ENCODE measurements at regions of chr6 and their contacts with region 1.

Region 1: DNA sequence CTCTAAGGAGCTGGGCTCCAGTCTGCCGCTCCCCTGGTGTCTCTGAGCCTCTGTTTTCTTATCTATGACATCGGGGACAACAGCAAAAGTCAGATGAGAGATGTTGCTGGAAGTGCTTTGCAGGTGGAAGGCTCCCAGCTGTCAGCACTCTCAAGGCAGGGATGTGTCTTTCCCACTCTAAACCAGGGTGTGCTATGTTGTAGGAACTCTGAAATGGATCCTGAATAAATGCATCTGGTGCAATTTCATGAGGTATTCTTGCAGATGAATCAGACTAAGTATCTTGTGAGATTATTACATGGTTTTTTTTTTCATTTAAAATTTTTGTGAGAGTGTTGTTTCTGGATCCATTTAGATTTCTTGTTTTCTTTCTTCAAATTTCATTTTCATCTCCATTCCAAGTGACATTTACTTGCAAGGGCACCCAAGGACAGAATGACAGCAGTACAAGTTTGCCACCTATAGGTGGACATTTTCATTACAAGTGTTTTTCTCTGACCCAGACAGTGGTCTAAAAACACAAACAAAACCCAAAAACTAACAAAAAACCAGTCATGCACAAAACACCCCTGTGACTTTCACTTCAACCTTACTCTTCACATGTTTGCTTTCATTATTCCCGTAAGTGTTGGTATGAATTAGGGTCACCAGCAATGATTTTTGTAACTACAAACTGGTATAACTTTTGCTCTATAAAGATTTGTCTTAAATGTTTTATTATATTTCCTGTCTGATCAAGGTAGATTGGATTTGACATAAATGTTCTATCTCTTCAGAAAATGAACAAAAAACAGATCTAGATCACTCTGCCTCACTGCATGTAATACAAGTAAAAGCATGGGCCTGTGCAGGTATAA is 14.7 kb upstream of the SIM1 start:
- DNase-seq: peak; percentile 39 to 42
- H3K4me3 ChIP-seq: no peak overlapping the region
- H3K4me1 ChIP-seq: no peaks in the 10 kb centered on the region
- H3K27me3 ChIP-seq: no peaks in the 10 kb centered on the region

Region 2: DNA sequence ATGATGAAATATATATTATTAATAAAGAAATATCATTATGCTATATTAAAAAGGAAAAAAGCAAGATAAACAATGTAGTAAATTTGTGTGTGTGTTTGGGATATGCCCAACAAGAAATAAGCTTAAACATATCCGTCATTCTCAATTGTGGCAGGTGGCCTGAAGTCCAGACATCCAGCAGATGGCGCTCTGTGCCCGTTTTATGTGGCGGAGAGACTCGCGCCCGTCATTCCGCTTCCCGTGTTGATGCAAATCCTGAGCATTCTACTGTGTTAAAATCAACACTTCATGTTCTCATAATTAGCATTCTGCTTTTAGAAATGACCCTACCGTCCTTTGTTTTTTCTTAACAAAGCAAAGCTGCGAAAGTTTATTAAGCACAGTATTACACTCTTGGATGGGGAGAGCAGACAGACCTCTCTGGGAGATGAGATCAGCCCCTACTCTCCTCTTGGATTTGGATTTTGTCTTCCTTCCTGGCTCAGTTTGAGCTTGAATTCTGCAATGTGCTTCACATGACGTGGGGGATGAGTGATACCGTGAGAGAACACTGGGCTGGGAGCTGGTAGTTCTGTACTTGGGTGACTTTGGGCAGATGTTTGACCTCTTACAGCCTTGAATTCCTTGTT is 611.2 kb before region 1 on chr6:
- in situ Hi-C with region 1: loop called (anchors 10 kb)
- DNase-seq: peak; percentile 69 to 90
- H3K4me3 ChIP-seq: no peak overlapping the region
- H3K4me1 ChIP-seq: no peaks in the 10 kb centered on the region
- H3K27me3 ChIP-seq: peaks cover 9% of the 10 kb centered on the region

Region 3: GRCh38 chr6:100126790-100127484 is 352.5 kb before region 1 on chr6:
- in situ Hi-C with region 1: loop called (anchors 5 kb)
- DNase-seq: no peak
- H3K4me3 ChIP-seq: no peak overlapping the region
- H3K4me1 ChIP-seq: no peaks in the 10 kb centered on the region
- H3K27me3 ChIP-seq: no peaks in the 10 kb centered on the region

Region 4: DNA sequence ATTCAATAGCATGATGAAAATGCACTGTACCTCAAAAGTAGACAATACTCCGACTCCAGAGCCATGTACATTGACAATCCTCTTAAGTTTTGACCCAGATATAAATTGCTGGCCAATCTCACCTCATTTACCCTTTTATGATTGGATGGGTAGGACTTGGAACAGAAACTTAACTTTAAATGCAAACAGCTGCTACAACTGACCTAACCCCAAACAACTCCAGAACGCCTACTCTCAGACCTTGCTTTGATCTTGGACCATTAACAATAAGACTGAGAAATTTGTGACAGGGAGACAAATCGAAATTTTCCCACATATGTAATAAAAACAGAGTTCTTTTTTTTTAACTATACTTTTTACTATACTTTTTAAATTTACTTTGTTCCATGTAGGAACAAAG is 284.9 kb before region 1 on chr6:
- in situ Hi-C with region 1: no loop called
- DNase-seq: no peak
- H3K4me3 ChIP-seq: no peak overlapping the region
- H3K4me1 ChIP-seq: no peaks in the 10 kb centered on the region
- H3K27me3 ChIP-seq: no peaks in the 10 kb centered on the region

Region 5: DNA sequence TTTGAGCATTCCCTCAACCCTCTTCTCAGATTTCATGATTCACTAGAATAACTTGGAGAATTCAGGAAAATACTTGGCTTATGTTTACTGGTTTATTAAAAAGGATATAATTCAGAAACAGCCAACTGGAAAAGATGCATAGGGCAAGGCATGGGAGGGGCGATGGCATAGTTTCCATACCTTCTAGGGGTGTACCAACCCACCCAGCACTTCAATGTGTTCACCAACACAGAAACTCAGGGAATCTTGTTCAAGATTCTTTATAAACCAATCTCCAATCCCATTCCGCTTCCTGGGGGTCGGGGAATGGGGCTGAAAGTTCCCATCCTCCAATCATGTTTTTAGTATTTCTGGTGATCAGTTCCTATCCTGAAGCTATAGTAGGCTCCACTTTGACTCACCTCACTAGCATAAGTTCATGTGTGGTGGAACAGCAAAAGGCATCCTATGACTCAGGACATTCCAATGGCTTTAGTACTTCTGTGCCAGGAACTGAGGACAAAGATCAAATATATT is 179.1 kb before region 1 on chr6:
- in situ Hi-C with region 1: no loop called
- DNase-seq: no peak
- H3K4me3 ChIP-seq: no peak overlapping the region
- H3K4me1 ChIP-seq: no peaks in the 10 kb centered on the region
- H3K27me3 ChIP-seq: no peaks in the 10 kb centered on the region

Region 6: DNA sequence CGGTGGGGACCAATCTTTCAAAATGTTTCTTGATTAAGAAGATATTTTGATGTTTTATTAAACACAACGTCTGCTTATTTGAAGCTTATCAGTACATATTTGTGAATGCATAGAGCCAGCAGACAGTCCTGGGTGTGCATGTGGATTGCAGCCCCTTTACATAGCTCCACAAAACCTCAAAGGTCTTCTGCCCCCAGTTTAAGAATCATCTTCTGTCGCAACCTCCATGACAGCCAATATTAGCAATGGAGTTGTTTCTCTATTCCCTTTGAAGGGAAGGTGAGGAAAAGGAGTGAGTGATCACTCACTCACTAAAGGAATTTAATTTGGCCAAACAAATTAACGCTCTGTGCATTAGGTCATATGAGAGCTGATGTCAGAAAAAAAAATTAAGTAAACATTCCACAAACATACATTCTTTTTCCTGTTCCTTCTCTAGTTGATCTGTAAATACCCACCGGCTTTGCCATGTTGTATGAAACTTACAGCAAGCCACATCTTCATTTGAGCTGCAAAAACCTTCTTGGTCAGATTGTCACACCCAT is 167.6 kb before region 1 on chr6:
- in situ Hi-C with region 1: no loop called
- DNase-seq: no peak
- H3K4me3 ChIP-seq: no peak overlapping the region
- H3K4me1 ChIP-seq: no peaks in the 10 kb centered on the region
- H3K27me3 ChIP-seq: no peaks in the 10 kb centered on the region

Region 7: GRCh38 chr6:100979267-100979666 is 499.9 kb after region 1 on chr6:
- in situ Hi-C with region 1: no loop called
- DNase-seq: no peak
- H3K4me3 ChIP-seq: no peak overlapping the region
- H3K4me1 ChIP-seq: no peaks in the 10 kb centered on the region
- H3K27me3 ChIP-seq: no peaks in the 10 kb centered on the region

Measured in HAP-1 (cell line).